ENCODE measurements at regions of chr1 and their contacts with region 1.

Region 1: GRCh38 chr1:205485338-205486228 is 18.9 kb upstream of the CDK18 start:
- DNase-seq: peak; percentile 59 to 87
- ATAC-seq: peak; percentile 56 to 80 (median 62)
- H3K4me3 ChIP-seq: no peak overlapping the region
- H3K4me3 Mint-ChIP-seq: no peak overlapping the region
- H3K27ac ChIP-seq: no peak overlapping the region
- H3K27ac Mint-ChIP-seq: peak overlapping the region in 1 of 2 donors; percentile 83
- H3K4me1 ChIP-seq: peaks cover 52% of the 10 kb centered on the region
- H3K4me1 Mint-ChIP-seq: peaks cover 43 to 56% of the 10 kb centered on the region in 2 donors
- H3K27me3 ChIP-seq: no peaks in the 10 kb centered on the region
- H3K27me3 Mint-ChIP-seq: peaks cover 8 to 29% of the 10 kb centered on the region in 2 donors
- CTCF ChIP-seq: peak; percentile 91

Region 2: DNA sequence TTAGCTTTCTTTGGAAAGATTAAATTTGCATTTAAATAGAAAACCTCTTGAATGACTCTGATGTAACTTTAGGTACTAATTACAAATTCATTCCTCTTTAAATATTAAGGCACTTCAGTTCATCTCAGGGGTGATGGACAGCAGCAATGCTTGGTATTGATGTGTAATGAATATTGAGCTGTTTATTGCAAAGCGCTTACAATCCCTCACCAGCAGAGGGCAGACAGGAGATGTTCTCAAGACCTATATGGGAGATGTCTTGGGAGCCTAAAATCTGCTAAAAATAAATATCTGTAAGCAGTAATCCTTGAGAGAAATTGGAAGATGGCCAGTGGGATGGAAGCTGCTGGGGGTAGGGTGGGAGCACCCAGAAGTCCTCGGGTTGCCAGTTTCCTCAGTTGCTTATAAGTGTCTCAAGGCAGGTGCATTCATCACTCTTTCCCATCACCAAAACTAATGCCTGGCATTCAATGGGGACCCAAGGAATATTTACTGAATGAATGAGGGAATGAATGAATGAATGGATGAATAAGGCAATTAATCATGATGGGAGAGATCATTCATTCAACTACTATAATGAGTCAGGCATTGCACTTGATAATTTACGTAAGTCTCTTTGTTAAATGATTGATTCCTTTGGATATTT is 131.2 kb before region 1 on chr1:
- intact Hi-C with region 1: loop called (anchors 1 kb)
- DNase-seq: peak; percentile 29 to 85
- ATAC-seq: peak; percentile 51 to 81 (median 80)
- H3K4me3 ChIP-seq: no peak overlapping the region
- H3K4me3 Mint-ChIP-seq: no peak overlapping the region
- H3K27ac ChIP-seq: no peak overlapping the region
- H3K27ac Mint-ChIP-seq: no peak overlapping the region
- H3K4me1 ChIP-seq: peaks cover 10% of the 10 kb centered on the region
- H3K4me1 Mint-ChIP-seq: no peaks in the 10 kb centered on the region
- H3K27me3 ChIP-seq: no peaks in the 10 kb centered on the region
- H3K27me3 Mint-ChIP-seq: peaks cover 14 to 31% of the 10 kb centered on the region in 2 donors
- CTCF ChIP-seq: peak; percentile 90

Region 3: GRCh38 chr1:205396967-205397616 is 88.5 kb before region 1 on chr1:
- intact Hi-C with region 1: loop called (anchors 1 kb)
- DNase-seq: peak in 1 of 2 donors; percentile 71
- ATAC-seq: peak; percentile 52 to 74 (median 57)
- H3K4me3 ChIP-seq: no peak overlapping the region
- H3K4me3 Mint-ChIP-seq: no peak overlapping the region
- H3K27ac ChIP-seq: no peak overlapping the region
- H3K27ac Mint-ChIP-seq: no peak overlapping the region
- H3K4me1 ChIP-seq: no peaks in the 10 kb centered on the region
- H3K4me1 Mint-ChIP-seq: no peaks in the 10 kb centered on the region
- H3K27me3 ChIP-seq: peaks cover 3% of the 10 kb centered on the region
- H3K27me3 Mint-ChIP-seq: peaks cover 21 to 27% of the 10 kb centered on the region in 2 donors
- CTCF ChIP-seq: peak; percentile 70

Region 4: GRCh38 chr1:205827623-205828022 is 342.0 kb after region 1 on chr1:
- intact Hi-C with region 1: no loop called
- DNase-seq: no peak
- ATAC-seq: no peak
- H3K4me3 ChIP-seq: no peak overlapping the region
- H3K4me3 Mint-ChIP-seq: no peak overlapping the region
- H3K27ac ChIP-seq: no peak overlapping the region
- H3K27ac Mint-ChIP-seq: no peak overlapping the region
- H3K4me1 ChIP-seq: peaks cover 11% of the 10 kb centered on the region
- H3K4me1 Mint-ChIP-seq: peaks cover 14% of the 10 kb centered on the region in 2 donors
- H3K27me3 ChIP-seq: no peaks in the 10 kb centered on the region
- H3K27me3 Mint-ChIP-seq: peaks cover 9 to 11% of the 10 kb centered on the region in 2 donors
- CTCF ChIP-seq: no peak